Astrocyte of the cerebellum (primary cell): ENCODE measurements at regions of chr6 and their contacts with region 1.

Region 1: DNA sequence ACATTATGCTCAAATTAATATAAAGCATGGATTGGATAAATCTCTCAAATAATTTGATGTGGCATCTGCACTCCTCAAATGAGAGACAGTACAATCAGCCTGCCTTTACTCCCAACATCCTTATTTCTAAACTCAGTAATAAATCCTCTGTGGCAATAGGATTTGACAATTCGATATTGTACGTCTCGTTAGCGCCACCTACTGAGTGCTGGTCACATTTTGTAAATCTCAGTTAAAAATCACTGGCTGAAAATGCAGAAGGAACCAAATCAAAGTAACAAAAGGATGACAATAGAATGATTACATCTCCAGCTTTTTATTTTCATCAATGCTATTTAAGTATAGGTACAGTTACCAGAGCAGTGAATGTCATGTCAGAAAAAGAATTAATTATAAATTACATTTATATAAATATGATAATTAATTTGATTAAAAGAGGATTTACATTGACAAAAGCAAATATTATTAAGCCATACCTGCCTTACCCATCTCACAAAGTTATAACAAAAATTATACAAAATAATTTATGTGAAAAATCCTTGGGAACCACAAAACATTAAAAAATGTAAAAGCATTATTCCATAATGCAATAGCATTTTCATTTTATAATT is 20.2 kb upstream of the GJE1 start:
- DNase-seq: peak; percentile 77
- H3K4me3 ChIP-seq: no peak overlapping the region
- CTCF ChIP-seq: peak; percentile 65

Region 2: GRCh38 chr6:141677598-141678211 is 434.9 kb before region 1 on chr6:
- in situ Hi-C with region 1: loop called (anchors 25 kb)
- DNase-seq: no peak
- H3K4me3 ChIP-seq: no peak overlapping the region
- CTCF ChIP-seq: peak; percentile 69

Region 3: DNA sequence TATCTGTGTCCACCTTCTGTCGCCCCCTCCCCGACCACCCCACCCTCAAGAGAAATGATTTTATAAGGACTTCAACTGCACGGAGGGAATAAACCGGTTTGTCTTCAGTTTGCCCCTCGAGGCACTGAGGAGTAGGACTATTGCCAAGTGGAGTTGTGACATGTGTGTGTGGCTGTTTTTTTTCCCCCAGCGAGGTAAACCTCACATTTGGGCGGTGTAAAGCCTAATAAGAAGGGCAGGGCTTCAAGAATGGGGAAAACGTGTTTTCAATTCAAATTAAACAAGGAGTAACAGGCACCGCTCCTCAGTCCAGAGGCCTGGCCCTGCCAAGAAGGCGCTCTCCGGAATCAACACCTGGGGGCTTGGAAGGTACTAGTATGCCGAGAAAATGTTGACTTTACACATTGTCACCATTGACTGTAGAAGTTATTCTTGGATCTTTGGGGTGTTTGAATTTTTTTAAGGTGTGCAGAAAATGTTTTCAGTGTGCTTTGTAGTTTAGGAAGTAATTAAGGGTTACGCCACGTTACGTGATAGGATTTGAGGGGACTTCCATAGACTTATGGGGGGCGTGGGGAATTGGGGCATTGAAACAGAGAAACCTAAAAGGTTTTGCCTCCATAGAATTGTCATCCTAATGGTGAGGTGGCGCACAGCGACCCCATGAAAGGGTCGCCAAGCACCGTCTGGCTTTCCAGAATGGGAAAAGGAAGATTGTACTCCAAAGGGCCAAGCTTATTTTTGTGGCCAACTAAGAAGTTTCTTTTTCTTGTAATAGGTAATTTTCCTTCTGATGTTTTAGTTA is 190.0 kb after region 1 on chr6:
- in situ Hi-C with region 1: no loop called
- DNase-seq: no peak
- H3K4me3 ChIP-seq: peak overlapping the region; percentile 64
- CTCF ChIP-seq: no peak